ENCODE measurements at regions of chr10 and their contacts with region 1.

Region 1: DNA sequence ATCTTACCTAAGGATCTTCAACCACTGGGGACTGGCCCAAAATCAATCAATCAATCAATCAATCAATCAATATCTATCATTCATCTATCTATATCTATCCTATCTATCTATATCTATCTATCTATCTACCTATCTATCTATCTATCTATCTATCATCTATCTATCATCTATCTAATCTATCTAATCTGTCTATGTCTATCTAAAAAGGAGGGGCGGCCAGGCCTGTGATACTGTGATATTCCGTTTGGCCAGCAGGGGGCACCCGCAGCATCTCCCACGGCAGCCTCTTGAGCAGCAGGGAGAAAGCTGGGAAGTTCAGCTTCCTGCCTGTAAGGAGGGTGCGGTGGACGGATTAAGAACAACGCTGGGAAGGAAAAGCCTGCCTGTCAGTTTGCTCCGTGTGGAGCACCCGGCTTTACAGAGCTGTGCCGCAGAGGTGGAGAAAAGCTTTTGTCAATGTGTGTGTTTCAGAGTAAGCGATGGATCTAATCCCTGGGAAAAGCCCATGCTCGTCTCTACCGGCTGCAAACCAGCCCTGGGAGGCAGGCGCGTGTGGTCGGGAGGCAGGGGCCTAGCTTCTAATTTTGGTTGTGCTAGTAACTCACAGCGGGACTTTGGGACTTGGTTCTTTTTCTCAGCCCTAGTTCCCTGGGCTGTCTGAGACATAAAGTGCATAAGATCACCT is 125.0 kb downstream of the SH2D4B start:
- DNase-seq: peak; percentile 86

Region 2: GRCh38 chr10:80647173-80647811 is 15.4 kb before region 1 on chr10:
- CTCF ChIA-PET with region 1: interaction called, 10 read pairs
- POLR2A ChIA-PET with region 1: no interaction called
- DNase-seq: no peak

Region 3: DNA sequence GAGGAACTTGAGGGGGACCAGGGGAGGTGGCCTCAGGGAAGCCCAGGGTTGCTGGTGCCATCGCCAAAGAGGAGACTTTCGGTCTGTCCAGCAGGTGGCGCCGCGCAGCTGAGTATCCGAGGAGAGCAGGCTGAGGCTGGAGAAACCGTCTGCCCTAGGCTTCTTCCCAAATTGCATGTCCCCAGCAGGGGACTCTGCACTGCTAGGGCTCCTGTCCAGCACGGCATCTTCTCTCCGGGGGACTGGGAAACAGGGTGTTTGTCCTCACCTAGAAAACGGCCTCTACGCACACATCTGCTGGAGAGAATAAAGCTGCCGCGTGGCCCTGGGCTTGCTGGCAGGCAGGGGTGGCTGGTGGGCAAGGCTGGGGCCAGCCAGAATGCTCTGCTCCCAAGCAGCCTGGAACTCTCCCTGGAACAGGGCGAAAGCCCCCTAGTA is 36.9 kb after region 1 on chr10:
- CTCF ChIA-PET with region 1: interaction called, 10 read pairs
- POLR2A ChIA-PET with region 1: no interaction called
- DNase-seq: peak; percentile 80

Region 4: GRCh38 chr10:80924063-80924952 is 261.6 kb after region 1 on chr10:
- CTCF ChIA-PET with region 1: interaction called, 13 read pairs
- POLR2A ChIA-PET with region 1: no interaction called
- DNase-seq: peak; percentile 46

Measured in HEK293T (cell line).